ENCODE measurements at regions of chr20 and their contacts with region 1.

Region 1: GRCh38 chr20:37901654-37902503 is 1.0 kb upstream of the VSTM2L start:
- DNase-seq: peak; percentile 81
- H3K4me3 Mint-ChIP-seq: peak overlapping the region; percentile 86
- H3K27ac Mint-ChIP-seq: no peak overlapping the region
- H3K4me1 Mint-ChIP-seq: peaks cover 33% of the 10 kb centered on the region
- H3K27me3 Mint-ChIP-seq: no peaks in the 10 kb centered on the region
- CTCF ChIP-seq: peak; percentile 45

Region 2: DNA sequence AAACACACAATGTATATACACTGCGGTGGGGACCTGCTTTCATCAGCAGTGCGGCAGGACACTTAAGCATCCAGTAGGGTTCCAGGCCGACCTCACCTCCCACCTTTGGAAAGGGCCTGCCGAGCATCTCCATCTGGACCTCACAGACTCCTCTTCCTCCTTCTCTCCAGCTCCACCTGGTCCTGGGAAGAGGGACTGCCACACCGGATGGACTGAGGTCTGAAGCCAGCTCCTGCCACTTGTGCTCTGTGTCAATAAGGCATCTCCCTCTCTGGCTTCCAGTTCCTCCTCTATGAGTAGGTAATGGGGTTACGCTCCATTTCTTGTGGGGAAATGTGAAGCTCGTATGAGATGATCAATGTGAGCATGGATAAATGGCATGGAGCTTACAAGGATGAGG is 399.9 kb before region 1 on chr20:
- CTCF ChIA-PET with region 1: no interaction called
- POLR2A ChIA-PET with region 1: no interaction called
- intact Hi-C with region 1: no loop called
- DNase-seq: no peak
- H3K4me3 Mint-ChIP-seq: no peak overlapping the region
- H3K27ac Mint-ChIP-seq: no peak overlapping the region
- H3K4me1 Mint-ChIP-seq: no peaks in the 10 kb centered on the region
- H3K27me3 Mint-ChIP-seq: no peaks in the 10 kb centered on the region
- CTCF ChIP-seq: no peak

Region 3: GRCh38 chr20:37833221-37833896 is 68.5 kb before region 1 on chr20:
- CTCF ChIA-PET with region 1: no interaction called
- POLR2A ChIA-PET with region 1: no interaction called
- intact Hi-C with region 1: no loop called
- DNase-seq: no peak
- H3K4me3 Mint-ChIP-seq: no peak overlapping the region
- H3K27ac Mint-ChIP-seq: no peak overlapping the region
- H3K4me1 Mint-ChIP-seq: no peaks in the 10 kb centered on the region
- H3K27me3 Mint-ChIP-seq: no peaks in the 10 kb centered on the region
- CTCF ChIP-seq: no peak

Region 4: DNA sequence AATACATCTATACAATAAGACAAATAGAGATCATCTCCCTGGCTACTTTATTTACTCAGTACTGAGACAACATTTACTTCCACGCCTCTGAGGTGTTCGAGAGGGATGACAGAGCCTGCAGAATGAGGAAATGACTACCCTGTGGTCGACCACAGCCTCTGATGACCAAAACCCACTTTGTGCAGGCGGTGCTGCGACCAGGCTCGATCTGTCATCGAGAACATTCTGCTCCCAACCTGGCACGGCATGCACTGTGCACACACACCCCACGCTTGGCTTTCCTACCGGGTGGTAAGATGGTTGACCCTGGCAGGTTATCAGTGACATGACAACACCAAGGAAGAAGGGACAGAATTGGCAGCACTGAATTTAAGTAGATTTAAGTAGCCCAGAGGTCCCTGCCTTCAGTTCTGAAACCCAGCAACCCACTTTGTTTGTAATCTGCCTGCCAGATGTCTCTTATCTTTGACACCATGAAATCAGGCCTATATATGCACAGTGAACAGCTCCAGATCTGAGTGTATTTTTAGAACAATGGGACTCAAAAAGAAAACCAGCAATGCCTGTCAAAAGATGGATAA is 88.8 kb after region 1 on chr20:
- CTCF ChIA-PET with region 1: interaction called, 25 read pairs
- POLR2A ChIA-PET with region 1: interaction called, 3 read pairs
- intact Hi-C with region 1: loop called (anchors 1 kb)
- DNase-seq: peak; percentile 50
- H3K4me3 Mint-ChIP-seq: peak overlapping the region; percentile 40
- H3K27ac Mint-ChIP-seq: peak overlapping the region; percentile 83
- H3K4me1 Mint-ChIP-seq: peaks cover 76% of the 10 kb centered on the region
- H3K27me3 Mint-ChIP-seq: no peaks in the 10 kb centered on the region
- CTCF ChIP-seq: no peak

Region 5: DNA sequence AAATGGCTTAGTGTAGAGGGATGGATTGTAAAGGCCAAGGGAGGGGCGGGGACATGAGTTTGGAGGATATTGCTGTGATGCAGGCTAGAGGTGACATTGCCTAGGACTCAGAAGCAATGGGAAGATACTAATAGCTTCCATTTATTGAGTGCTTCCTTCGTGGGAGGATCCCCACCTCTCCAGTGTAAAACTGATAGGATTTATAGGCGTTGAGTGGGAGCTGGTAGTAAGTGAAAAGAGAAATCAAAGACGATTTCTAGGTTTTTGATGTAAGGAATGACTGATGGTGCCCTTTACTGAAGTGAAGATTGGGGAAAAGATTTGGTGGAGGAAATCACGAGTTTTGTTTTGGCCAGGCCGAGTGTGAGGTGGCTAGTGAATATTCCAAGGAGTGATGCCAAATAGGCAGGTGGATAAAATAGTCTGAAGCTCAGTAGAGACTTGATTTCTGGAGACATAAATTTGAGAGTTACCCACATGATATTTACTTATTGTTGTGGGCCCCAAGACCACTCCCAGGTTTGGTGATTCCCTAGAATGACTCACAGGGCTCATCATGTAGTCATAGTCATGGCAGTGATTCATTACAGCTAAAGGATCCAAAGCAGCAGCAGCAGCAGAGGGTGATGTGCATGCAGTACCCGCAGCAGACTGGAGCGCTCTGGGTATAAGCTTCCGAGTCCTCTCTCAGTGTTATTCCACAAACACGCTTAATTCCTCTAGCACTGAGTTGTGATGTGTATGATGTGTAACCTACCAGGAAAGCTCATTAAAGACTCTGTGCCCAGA is 141.8 kb after region 1 on chr20:
- CTCF ChIA-PET with region 1: interaction called, 5 read pairs
- POLR2A ChIA-PET with region 1: no interaction called
- intact Hi-C with region 1: loop called (anchors 5 kb)
- DNase-seq: peak; percentile 85
- H3K4me3 Mint-ChIP-seq: no peak overlapping the region
- H3K27ac Mint-ChIP-seq: peak overlapping the region; percentile 88
- H3K4me1 Mint-ChIP-seq: peaks cover 19% of the 10 kb centered on the region
- H3K27me3 Mint-ChIP-seq: no peaks in the 10 kb centered on the region
- CTCF ChIP-seq: no peak

Region 6: GRCh38 chr20:38134387-38135270 is 232.8 kb after region 1 on chr20:
- CTCF ChIA-PET with region 1: no interaction called
- POLR2A ChIA-PET with region 1: no interaction called
- intact Hi-C with region 1: no loop called
- DNase-seq: peak; percentile 23
- H3K4me3 Mint-ChIP-seq: no peak overlapping the region
- H3K27ac Mint-ChIP-seq: no peak overlapping the region
- H3K4me1 Mint-ChIP-seq: peaks cover 12% of the 10 kb centered on the region
- H3K27me3 Mint-ChIP-seq: no peaks in the 10 kb centered on the region
- CTCF ChIP-seq: no peak